ENCODE measurements at regions of chr16 and their contacts with region 1.

Region 1: GRCh38 chr16:83952940-83953795 is at the start of gene OSGIN1:
- DNase-seq: peak; percentile 66
- H3K4me3 Mint-ChIP-seq: peak within 1 kb of the TSS; percentile 80
- H3K27ac Mint-ChIP-seq: peak within 1 kb of the TSS; percentile 48
- H3K4me1 Mint-ChIP-seq: peaks cover 18% of the 10 kb centered on the region
- H3K27me3 Mint-ChIP-seq: peaks cover 11% of the 10 kb centered on the region
- total RNA-seq, gene OSGIN1: 1.2 and 2.2 TPM in 2 replicates

Region 2: DNA sequence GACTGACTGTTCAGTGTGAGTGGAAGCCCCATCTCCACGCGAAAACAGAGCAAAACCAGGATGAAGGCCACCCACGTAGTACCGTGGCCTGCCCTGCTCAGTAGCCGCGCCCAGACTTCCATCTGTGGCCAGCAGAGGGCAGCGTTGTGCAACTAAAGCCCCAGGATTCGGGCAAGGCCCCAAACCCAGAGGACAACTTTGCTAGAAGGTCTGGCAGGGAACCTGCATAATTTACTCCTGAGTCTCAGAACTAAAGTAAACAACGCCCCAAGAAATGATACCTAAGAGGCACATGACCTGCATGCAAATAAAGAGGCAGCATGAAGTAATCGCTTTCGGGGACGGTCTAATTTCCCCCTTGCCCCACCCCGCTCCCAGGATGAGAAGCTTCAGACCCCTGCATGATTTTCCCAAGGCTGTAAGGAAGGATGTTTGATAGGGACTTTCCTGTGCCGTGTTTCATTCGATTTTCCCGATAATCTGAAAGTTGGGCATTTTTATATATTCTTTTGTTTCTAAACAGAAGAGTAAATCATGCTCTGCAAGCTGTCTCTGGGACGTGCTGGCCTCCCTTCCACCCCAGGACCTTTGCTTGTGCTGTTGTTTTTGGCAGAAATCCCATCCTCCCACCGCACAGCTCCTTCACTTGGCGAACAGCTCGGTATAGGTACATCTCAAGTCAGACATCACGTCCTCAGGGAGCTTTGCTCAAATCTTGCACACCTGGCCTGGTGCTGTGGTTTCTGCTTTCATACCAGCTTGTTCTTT is 126.8 kb before region 1 on chr16:
- intact Hi-C with region 1: loop called (anchors 1 kb)
- DNase-seq: peak; percentile 70
- H3K4me3 Mint-ChIP-seq: no peak overlapping the region
- H3K27ac Mint-ChIP-seq: no peak overlapping the region
- H3K4me1 Mint-ChIP-seq: no peaks in the 10 kb centered on the region
- H3K27me3 Mint-ChIP-seq: peaks cover 6% of the 10 kb centered on the region

Region 3: DNA sequence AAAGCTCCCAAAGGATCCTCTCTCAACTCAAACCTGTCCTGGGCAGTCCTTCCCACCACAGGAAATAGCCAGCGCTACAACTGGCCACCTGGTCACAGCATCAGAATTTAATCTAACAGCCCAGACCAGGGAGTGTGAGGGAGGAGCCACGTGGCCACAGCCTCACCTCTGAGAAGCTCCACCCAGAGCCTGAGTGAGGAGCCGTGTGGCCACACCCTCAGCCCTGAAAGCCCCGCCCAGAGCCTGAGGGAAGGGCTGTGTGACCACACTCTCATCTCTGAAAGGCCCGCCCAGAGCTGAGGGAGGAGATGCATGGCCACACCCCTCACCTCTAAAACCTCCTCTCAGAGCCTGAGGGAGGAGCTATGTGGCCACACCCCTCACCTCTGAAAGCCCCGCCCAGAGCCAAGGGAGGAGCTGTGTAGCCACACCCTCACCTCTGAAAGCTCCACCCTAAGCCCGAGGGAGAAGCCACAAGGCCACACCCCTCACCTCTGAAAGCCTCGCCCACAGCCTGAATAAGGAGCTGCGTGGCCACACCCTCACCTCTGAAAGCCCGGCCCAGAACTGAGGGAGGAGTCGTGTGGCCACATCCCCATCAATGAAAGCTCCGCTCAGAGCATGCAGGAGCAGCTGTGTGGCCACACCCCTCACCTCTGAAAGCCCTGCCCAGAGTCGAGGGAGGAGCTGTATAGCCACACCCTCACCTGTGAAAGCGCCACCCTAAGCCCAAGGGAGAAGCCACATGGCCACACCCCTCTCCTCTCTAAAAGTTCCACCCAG is 60.8 kb after region 1 on chr16:
- intact Hi-C with region 1: loop called (anchors 1 kb)
- DNase-seq: peak; percentile 47
- H3K4me3 Mint-ChIP-seq: no peak overlapping the region
- H3K27ac Mint-ChIP-seq: no peak overlapping the region
- H3K4me1 Mint-ChIP-seq: no peaks in the 10 kb centered on the region
- H3K27me3 Mint-ChIP-seq: peaks cover 3% of the 10 kb centered on the region

Region 4: DNA sequence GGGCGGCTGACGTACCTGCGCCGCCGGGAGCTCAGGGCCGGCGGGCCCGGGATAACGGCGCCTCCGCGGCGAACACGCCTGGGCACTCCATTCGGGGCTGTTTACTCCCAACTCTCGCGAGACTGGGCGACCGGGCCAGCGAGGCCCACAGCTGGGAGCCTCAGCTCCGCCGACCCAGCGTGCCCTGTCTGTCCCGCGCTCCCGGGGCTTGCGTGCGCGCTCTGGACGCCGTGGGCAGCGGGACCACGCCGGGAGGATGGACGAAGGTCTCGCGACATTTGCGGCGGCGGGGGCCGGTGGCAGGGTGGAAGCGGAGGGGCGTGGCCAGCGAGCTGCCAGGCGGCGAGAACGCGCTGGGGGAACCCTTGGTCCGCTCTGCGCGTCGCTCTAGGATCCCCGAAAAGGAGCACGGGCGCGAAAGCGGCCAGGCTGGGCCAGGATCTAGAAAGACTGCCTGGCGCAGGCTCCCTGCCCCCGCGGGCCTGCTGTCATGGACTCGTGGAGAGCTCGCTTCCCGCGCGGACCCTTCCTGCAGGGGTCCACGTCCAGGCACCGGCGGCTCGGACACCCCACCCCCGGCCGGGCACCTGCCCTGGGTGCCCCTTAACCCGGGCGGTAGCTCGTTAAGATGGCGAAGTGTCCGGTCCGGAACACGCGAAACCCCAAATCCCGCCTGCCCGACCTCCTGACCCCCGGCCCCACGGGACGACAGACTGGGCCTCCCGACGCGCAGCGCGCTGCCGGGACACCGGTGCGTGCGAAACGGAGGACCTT is 163.7 kb after region 1 on chr16 and contains the start of gene MBTPS1:
- intact Hi-C with region 1: loop called (anchors 1 kb)
- DNase-seq: peak; percentile 98
- H3K4me3 Mint-ChIP-seq: peak within 1 kb of the TSS; percentile 92
- H3K27ac Mint-ChIP-seq: peak within 1 kb of the TSS; percentile 95
- H3K4me1 Mint-ChIP-seq: peaks cover 22% of the 10 kb centered on the region
- H3K27me3 Mint-ChIP-seq: no peaks in the 10 kb centered on the region
- total RNA-seq, gene MBTPS1: 54.5 and 60.0 TPM in 2 replicates

Region 5: DNA sequence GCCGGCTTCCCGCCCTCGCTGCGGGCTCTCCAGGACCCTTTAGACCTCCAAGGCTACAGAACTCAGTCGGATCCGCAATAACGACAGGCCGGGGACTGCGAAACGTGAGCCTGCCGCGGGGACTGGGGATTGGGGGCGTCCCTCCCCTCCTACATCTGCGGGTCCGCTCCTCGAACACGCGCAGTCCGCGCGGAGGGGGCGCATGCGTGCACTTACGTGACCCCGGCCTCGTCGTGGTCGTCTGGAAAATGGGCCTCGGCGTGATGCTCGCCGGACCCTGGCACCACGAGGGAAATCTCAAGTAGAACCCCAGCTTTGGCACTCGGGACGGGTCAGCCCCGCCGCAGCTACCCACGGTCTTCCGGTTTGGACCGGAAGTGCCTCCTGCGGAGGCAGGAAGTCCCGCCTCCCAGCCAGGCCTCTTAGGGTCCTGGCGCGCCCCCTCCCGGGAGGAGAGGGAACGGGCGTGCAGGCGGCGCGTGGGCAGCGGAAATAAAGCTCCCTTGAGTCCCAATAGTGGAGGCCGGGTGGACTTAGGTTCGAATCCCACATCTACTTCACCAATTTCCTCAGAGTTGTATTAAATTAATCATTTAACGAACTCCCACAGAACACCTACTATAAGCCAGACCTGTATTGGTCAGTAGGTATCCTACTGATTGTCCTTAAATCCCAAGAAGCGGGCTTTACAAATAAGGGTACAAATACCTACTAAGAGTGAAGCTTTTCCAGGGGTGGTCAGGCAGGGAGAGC is 233.7 kb after region 1 on chr16 and contains the start of gene TAF1C:
- intact Hi-C with region 1: loop called (anchors 2 kb)
- DNase-seq: peak; percentile 86
- H3K4me3 Mint-ChIP-seq: peak within 1 kb of the TSS; percentile 95
- H3K27ac Mint-ChIP-seq: peak within 1 kb of the TSS; percentile 89
- H3K4me1 Mint-ChIP-seq: peaks cover 6% of the 10 kb centered on the region
- H3K27me3 Mint-ChIP-seq: no peaks in the 10 kb centered on the region
- total RNA-seq, gene TAF1C: 67.9 and 74.4 TPM in 2 replicates

Measured in activated T-helper 1 cell treated with anti-CD3 and anti-CD28 coated beads, Interleukin-12 subunit alpha, Interleukin-12 subunit beta, Interleukin-2, Interleukin-4 antibody, amounts not matched to agents 30 ng/mL and 10 ng/mL and 1 ng/mL, durations not matched to agents 14 hours and 24 hours and 36 hours (primary cell).